H1 (cell line): ENCODE measurements at regions of chr4 and their contacts with region 1.

Region 1: GRCh38 chr4:111854494-111855087 is 290.7 kb upstream of the FAM241A start:
- DNase-seq: no peak
- H3K4me3 ChIP-seq: no peak overlapping the region
- H3K27ac ChIP-seq: no peak overlapping the region
- H3K4me1 ChIP-seq: no peaks in the 10 kb centered on the region
- H3K27me3 ChIP-seq: no peaks in the 10 kb centered on the region
- CTCF ChIP-seq: peak in 2 of 3 experiments; percentile 60 to 66; a peak in 3 of 4 replicates
- EP300 ChIP-seq: no peak
- POLR2A ChIP-seq: no peak
- RAD21 ChIP-seq: peak; percentile 83 to 87

Region 2: DNA sequence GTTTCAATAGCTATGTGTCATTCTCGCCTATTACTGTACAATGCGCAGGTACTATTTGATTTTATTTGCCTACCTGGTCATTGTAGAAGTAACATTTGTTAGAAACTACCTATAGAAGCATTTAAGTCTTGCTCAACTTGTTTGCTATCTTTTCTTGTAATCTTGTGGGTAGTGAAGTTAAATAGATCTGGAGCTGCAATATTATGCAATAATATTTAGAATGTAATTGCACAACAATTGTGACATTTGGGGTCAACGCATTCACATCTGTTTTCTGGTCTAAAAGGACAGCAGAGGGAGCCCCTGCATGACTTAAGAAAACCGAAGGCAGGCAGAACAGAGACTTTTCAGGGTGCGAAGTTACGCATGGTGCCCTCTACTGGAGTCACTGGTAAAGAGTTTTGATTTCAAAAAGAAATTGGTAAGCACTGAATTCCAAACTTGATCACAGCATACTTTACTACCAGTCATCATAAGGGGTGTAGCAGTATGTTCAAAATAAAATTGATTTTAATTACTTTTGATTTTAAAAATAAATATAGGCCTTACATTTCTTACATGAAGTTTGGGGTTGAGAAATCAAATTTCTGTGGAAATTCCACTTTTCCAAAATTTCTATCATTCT is 212.5 kb before region 1 on chr4:
- CTCF ChIA-PET with region 1: interaction called, 30 read pairs
- POLR2A ChIA-PET with region 1: no interaction called
- DNase-seq: peak; percentile 47 to 51
- H3K4me3 ChIP-seq: no peak overlapping the region
- H3K27ac ChIP-seq: no peak overlapping the region
- H3K4me1 ChIP-seq: no peaks in the 10 kb centered on the region
- H3K27me3 ChIP-seq: no peaks in the 10 kb centered on the region
- CTCF ChIP-seq: peak; percentile 26 to 99 (median 89)
- EP300 ChIP-seq: no peak
- POLR2A ChIP-seq: no peak
- RAD21 ChIP-seq: peak; percentile 91

Region 3: DNA sequence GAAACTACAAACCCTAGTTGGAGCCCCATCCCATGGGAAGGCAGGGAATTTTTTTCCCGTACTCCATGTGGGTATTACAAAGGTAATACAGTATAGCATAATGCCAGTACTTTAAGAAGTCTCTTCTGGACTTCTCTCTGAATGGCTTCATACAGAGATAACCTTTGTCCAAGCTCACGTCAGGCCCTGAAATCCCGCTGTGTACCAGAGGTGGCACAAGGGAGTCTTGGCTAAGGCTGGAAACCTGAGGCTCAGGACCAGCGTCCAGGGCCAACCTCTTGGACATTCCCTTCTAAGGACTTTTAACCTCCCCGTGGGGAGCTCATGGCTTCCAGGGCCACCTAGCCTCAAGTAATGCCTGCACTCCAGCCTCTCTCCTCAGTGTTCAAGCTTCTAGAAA is 48.3 kb before region 1 on chr4:
- CTCF ChIA-PET with region 1: interaction called, 47 read pairs
- POLR2A ChIA-PET with region 1: no interaction called
- DNase-seq: peak; percentile 15 to 52
- H3K4me3 ChIP-seq: no peak overlapping the region
- H3K27ac ChIP-seq: no peak overlapping the region
- H3K4me1 ChIP-seq: 0 out of 7 replicates have a peak, but pooled peaks cover 0 to 2% (median 0%) of the 10 kb centered on the region in 4 experiments
- H3K27me3 ChIP-seq: peaks cover 15 to 48% (median 40%) of the 10 kb centered on the region in 4 experiments
- CTCF ChIP-seq: peak; percentile 47 to 69 (median 57)
- EP300 ChIP-seq: no peak
- POLR2A ChIP-seq: no peak
- RAD21 ChIP-seq: peak in 1 of 2 experiments; percentile 38; a peak in 1 of 4 replicates

Region 4: GRCh38 chr4:111821342-111821741 is 33.2 kb before region 1 on chr4:
- CTCF ChIA-PET with region 1: interaction called, 11 read pairs
- POLR2A ChIA-PET with region 1: no interaction called
- DNase-seq: no peak
- H3K4me3 ChIP-seq: no peak overlapping the region
- H3K27ac ChIP-seq: no peak overlapping the region
- H3K4me1 ChIP-seq: no peaks in the 10 kb centered on the region
- H3K27me3 ChIP-seq: no peaks in the 10 kb centered on the region
- CTCF ChIP-seq: no peak
- EP300 ChIP-seq: no peak
- POLR2A ChIP-seq: no peak
- RAD21 ChIP-seq: no peak

Region 5: DNA sequence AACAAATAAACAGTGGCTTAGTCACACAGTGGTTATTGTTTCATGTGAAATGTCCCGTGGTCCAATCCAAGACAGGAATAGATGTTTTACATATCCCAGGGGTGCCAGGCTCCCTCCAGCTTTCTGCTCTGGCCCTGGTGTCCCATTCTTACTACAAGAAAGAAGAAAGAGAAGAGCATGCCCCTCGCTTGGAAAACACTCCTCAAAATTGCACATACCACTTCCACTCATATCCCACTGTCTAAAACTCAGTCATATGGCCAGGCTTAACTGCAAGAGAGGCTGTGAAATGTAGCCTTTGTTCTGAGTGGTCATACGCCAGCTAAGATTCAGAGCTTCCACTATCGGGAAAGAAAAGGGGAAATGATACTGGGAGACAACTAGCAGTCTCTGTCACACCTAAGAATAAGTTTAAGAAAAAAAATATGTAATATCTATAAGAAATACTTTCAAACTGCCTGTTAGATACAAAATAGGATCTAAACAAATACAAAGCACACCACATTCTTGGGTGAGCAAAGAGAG is 16.1 kb before region 1 on chr4:
- CTCF ChIA-PET with region 1: interaction called, 25 read pairs
- POLR2A ChIA-PET with region 1: no interaction called
- DNase-seq: no peak
- H3K4me3 ChIP-seq: no peak overlapping the region
- H3K27ac ChIP-seq: no peak overlapping the region
- H3K4me1 ChIP-seq: no peaks in the 10 kb centered on the region; a peak in 1 of 7 replicates
- H3K27me3 ChIP-seq: no peaks in the 10 kb centered on the region
- CTCF ChIP-seq: no peak
- EP300 ChIP-seq: no peak
- POLR2A ChIP-seq: no peak
- RAD21 ChIP-seq: no peak

Region 6: GRCh38 chr4:112031712-112032328 is 177.2 kb after region 1 on chr4:
- CTCF ChIA-PET with region 1: interaction called, 10 read pairs
- POLR2A ChIA-PET with region 1: no interaction called
- DNase-seq: no peak
- H3K4me3 ChIP-seq: no peak overlapping the region
- H3K27ac ChIP-seq: no peak overlapping the region
- H3K4me1 ChIP-seq: no peaks in the 10 kb centered on the region
- H3K27me3 ChIP-seq: no peaks in the 10 kb centered on the region
- CTCF ChIP-seq: peak in 2 of 3 experiments; percentile 67 to 70; a peak in 3 of 4 replicates
- EP300 ChIP-seq: no peak
- POLR2A ChIP-seq: no peak
- RAD21 ChIP-seq: peak; percentile 92 to 93